ENCODE measurements at regions of chr11 and their contacts with region 1.

Region 1: DNA sequence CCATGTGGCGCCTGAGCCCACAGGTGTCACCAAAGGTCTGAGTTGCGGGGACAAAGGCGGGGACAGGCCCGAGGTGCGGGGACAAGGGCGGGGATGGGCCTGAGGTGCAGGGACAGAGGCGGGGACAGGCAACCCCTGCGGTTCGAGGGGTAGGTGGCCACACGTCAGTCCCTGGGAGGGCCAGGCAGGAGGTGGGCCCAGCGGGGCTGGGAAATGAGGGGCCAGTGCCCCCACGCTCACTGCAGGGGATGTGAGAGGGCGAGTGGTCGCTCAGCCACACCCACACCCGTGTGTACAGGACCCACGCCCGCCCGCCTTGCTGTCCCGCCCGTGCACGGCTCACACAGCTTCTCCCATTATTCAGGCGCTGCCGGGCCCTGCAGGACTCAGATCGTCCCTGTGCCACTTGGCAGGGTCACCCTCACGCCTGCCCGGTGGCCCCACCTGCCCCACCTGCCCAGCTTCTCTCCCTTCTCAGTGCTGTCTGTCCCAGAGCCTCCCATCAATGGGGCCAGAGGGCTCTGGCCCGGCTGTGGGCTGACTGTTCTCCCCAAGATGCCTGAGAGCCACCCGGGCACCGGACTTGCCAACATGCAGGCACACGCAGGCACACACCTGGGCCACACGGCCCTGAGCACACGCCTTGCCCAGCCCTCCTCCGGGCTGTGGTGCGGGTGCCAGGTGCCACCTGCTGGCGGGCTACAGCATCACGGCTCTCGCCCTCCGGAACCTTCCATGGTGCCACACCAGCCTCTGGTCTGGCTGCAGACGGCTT is 14.2 kb upstream of the MUC6 start:
- DNase-seq: peak; percentile 75 to 80
- H3K4me3 ChIP-seq: no peak overlapping the region
- H3K27ac ChIP-seq: no peak overlapping the region
- H3K4me1 ChIP-seq: peaks cover 4 to 18% of the 10 kb centered on the region in 2 donors
- H3K27me3 ChIP-seq: no peaks in the 10 kb centered on the region
- CTCF ChIP-seq: peak; percentile 69 to 98 (median 96)
- POLR2A ChIP-seq: no peak

Region 2: GRCh38 chr11:848380-848931 is 202.3 kb before region 1 on chr11:
- intact Hi-C with region 1: loop called (anchors 5 kb)
- DNase-seq: peak; percentile 45 to 47
- H3K4me3 ChIP-seq: no peak overlapping the region
- H3K27ac ChIP-seq: no peak overlapping the region
- H3K4me1 ChIP-seq: peaks cover 44 to 54% of the 10 kb centered on the region in 2 donors
- H3K27me3 ChIP-seq: no peaks in the 10 kb centered on the region
- CTCF ChIP-seq: peak; percentile 62 to 93 (median 76)
- POLR2A ChIP-seq: no peak

Region 3: DNA sequence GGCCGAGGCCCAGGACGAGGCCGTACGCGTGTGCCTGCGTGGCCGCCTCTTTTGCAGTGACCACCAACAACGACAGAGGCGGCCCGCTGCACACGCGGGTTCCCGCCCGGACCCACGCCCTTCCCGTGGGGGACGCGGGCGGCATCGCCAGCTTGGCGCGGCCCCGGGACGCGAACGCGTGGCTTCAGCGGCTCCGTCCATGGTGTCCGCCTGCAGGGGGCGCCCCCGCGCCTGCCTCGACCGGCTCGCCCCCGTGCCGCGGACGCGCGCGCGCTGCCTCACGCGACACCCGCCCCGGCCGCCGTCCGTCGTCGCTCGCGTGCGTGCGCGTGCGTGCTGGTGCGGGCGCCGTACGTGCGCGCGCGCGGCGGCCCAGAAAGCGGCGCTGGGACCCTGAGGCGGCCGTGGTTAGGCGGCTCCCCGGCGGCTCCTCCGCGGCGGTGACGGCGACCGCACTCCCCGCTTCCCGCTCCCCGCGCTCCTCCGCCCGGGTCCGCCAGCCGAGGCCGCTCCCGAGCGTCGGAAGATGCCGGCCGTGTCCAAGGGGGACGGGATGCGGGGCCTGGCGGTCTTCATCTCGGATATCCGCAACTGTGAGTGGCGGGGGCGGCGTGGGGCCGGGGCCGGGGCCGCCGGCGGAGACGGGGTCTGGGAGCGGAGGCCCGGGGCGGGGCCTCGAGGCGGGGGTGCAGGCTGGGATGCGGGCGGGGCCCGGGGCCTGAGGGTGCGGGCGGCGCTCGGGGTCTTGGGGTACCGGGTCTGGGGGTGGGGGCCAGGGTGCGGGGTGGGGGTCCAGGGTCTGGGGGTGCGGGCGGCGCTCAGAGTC is 125.1 kb before region 1 on chr11 and contains the start of gene AP2A2:
- intact Hi-C with region 1: loop called (anchors 5 kb)
- DNase-seq: peak; percentile 88
- H3K4me3 ChIP-seq: peak within 1 kb of the TSS; percentile 48 to 84 (median 83)
- H3K27ac ChIP-seq: peak within 1 kb of the TSS; percentile 72 to 90 (median 89)
- H3K4me1 ChIP-seq: peaks cover 8 to 16% of the 10 kb centered on the region in 2 donors
- H3K27me3 ChIP-seq: no peaks in the 10 kb centered on the region
- CTCF ChIP-seq: peak; percentile 24 to 98 (median 71)
- POLR2A ChIP-seq: peak in 1 of 2 donors; percentile 78
- total RNA-seq, gene AP2A2: 37.2 to 67.3 (median 54.1) TPM

Region 4: DNA sequence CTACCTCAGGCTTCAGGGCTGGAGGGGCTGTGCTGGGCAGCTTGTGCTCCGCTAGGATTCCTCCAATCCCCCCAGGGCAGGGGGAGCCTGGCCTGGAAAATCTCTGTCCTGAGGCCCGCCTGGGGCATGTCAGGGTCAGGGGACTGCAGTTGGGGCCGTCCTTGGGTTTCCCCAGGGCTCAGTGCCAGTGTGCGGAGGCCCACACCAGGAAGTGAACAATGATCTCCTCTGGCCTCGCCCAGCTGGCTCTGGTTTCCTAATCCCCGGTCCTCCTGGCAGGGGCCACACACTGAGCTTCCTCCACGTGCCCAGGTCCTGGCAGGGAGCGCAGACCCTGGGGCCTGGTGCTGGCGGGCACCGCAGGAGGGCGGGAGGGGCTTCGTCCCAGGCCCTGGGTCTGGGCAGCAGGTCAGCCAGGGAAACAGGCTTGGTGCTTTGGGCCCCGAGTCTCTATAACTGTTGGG is 22.5 kb after region 1 on chr11:
- intact Hi-C with region 1: no loop called
- DNase-seq: no peak
- H3K4me3 ChIP-seq: no peak overlapping the region
- H3K27ac ChIP-seq: no peak overlapping the region
- H3K4me1 ChIP-seq: no peaks in the 10 kb centered on the region
- H3K27me3 ChIP-seq: no peaks in the 10 kb centered on the region
- CTCF ChIP-seq: no peak
- POLR2A ChIP-seq: no peak

Measured in thyroid gland (tissue), 4 donors.